Calu3 (cell line): ENCODE measurements at regions of chr4 and their contacts with region 1.

Region 1: GRCh38 chr4:12633053-12633651 is 851.0 kb downstream of the RAB28 start:
- DNase-seq: peak; percentile 72
- H3K4me3 Mint-ChIP-seq: no peak overlapping the region
- H3K27ac Mint-ChIP-seq: no peak overlapping the region
- H3K4me1 Mint-ChIP-seq: no peaks in the 10 kb centered on the region
- H3K27me3 Mint-ChIP-seq: peaks cover 11% of the 10 kb centered on the region
- CTCF ChIP-seq: peak; percentile 81

Region 2: GRCh38 chr4:11805842-11806241 is 827.3 kb before region 1 on chr4:
- CTCF ChIA-PET with region 1: interaction called, 4 read pairs
- intact Hi-C with region 1: loop called (anchors 10 kb)
- DNase-seq: peak; percentile 2
- H3K4me3 Mint-ChIP-seq: no peak overlapping the region
- H3K27ac Mint-ChIP-seq: no peak overlapping the region
- H3K4me1 Mint-ChIP-seq: peaks cover 17% of the 10 kb centered on the region
- H3K27me3 Mint-ChIP-seq: no peaks in the 10 kb centered on the region
- CTCF ChIP-seq: no peak